Sigmoid colon (tissue), 7 donors: ENCODE measurements at regions of chr6 and their contacts with region 1.

Region 1: GRCh38 chr6:56757588-56757984 is 114.9 kb upstream of the DST start:
- DNase-seq: peak; percentile 64
- H3K4me3 ChIP-seq: no peak overlapping the region
- H3K27ac ChIP-seq: peak overlapping the region; percentile 24 to 68 (median 48)
- H3K4me1 ChIP-seq: peaks cover 0 to 82% (median 49%) of the 10 kb centered on the region in 4 donors
- H3K27me3 ChIP-seq: no peaks in the 10 kb centered on the region
- CTCF ChIP-seq: peak in 3 of 4 experiments; percentile 20 to 42 (median 34)
- EP300 ChIP-seq: no peak
- POLR2A ChIP-seq: no peak

Region 2: DNA sequence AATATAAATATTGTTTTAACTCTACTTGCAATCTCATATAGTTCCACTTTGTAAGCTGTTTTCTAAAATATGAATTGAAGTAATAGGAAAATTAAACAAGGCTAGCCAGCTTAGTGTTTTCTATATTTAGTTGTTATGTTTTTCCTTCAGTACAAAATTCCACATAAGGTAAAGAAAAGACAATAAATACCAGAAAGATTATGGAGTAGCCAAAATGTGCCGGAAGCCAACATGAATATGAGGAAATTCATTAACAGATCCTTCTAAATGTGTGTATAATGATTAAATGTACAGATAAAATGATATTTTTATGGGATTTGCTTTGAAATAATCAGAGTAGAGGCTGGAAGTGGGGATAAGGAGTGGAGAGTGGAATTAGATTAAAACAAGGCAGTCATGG is 457.7 kb before region 1 on chr6:
- intact Hi-C with region 1: no loop called
- DNase-seq: no peak
- H3K4me3 ChIP-seq: no peak overlapping the region
- H3K27ac ChIP-seq: no peak overlapping the region
- H3K4me1 ChIP-seq: peaks cover 0 to 29% (median 18%) of the 10 kb centered on the region in 4 donors
- H3K27me3 ChIP-seq: no peaks in the 10 kb centered on the region
- CTCF ChIP-seq: no peak
- EP300 ChIP-seq: no peak
- POLR2A ChIP-seq: no peak

Region 3: GRCh38 chr6:56604186-56604585 is 153.4 kb before region 1 on chr6:
- intact Hi-C with region 1: no loop called
- DNase-seq: no peak
- H3K4me3 ChIP-seq: no peak overlapping the region
- H3K27ac ChIP-seq: no peak overlapping the region
- H3K4me1 ChIP-seq: no peaks in the 10 kb centered on the region
- H3K27me3 ChIP-seq: no peaks in the 10 kb centered on the region
- CTCF ChIP-seq: no peak
- EP300 ChIP-seq: no peak
- POLR2A ChIP-seq: no peak

Region 4: GRCh38 chr6:56637640-56638039 is 119.9 kb before region 1 on chr6:
- intact Hi-C with region 1: loop called (anchors 5 kb)
- DNase-seq: no peak
- H3K4me3 ChIP-seq: no peak overlapping the region
- H3K27ac ChIP-seq: peak overlapping the region in 3 of 4 donors; percentile 23 to 58 (median 34)
- H3K4me1 ChIP-seq: peaks cover 0 to 17% (median 1%) of the 10 kb centered on the region in 4 donors
- H3K27me3 ChIP-seq: no peaks in the 10 kb centered on the region
- CTCF ChIP-seq: peak; percentile 52 to 73 (median 60)
- EP300 ChIP-seq: no peak
- POLR2A ChIP-seq: no peak

Region 5: DNA sequence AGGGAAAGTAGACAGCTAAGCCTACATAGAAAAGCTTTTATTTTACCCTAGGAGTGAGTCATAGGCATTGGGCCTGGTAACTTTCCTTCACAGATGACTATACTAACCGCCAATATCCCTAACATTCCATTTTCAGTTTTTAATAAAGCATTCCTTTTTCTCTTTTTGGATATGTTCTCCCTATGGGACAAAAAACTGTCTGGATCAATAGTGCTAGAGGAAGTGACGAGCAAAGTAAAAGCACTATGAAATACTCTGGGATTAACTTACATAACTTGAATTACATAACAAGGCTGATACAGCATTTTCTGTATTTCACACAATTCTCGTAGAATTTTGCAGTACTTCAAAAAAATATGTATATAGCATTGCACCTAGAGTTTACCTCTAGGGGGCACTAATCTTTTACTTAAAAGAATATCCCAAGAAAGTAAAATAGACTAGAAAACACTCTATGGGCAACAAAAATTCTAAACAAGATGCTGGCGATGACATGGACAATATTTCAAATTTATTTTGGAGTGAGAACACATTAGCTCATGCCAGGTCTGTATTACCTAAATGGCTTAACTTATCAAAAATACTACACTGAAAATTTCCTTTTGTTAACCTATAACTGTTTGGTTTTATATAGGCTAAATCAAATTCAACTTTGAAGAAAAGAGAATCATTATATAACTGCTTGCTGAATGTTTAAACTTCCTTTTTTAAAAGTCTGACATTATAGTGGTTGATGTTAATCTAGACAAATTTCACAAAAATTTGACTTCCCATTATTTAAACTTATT is 48.6 kb before region 1 on chr6:
- intact Hi-C with region 1: loop called (anchors 5 kb)
- DNase-seq: no peak
- H3K4me3 ChIP-seq: no peak overlapping the region
- H3K27ac ChIP-seq: peak overlapping the region; percentile 4 to 74 (median 72)
- H3K4me1 ChIP-seq: peaks cover 0 to 76% (median 46%) of the 10 kb centered on the region in 4 donors
- H3K27me3 ChIP-seq: no peaks in the 10 kb centered on the region
- CTCF ChIP-seq: peak; percentile 19 to 65 (median 49)
- EP300 ChIP-seq: no peak
- POLR2A ChIP-seq: no peak

Region 6: GRCh38 chr6:56927538-56928453 is 170.2 kb after region 1 on chr6:
- intact Hi-C with region 1: no loop called
- DNase-seq: no peak
- H3K4me3 ChIP-seq: no peak overlapping the region
- H3K27ac ChIP-seq: no peak overlapping the region
- H3K4me1 ChIP-seq: no peaks in the 10 kb centered on the region
- H3K27me3 ChIP-seq: no peaks in the 10 kb centered on the region
- CTCF ChIP-seq: no peak
- EP300 ChIP-seq: no peak
- POLR2A ChIP-seq: no peak